ENCODE measurements at regions of chr16 and their contacts with region 1.

Region 1: GRCh38 chr16:29784901-29785500 is 5.5 kb upstream of the KIF22 start:
- DNase-seq: peak; percentile 83
- ATAC-seq: peak; percentile 95
- H3K4me3 Mint-ChIP-seq: peak overlapping the region; percentile 47
- H3K27ac Mint-ChIP-seq: no peak overlapping the region
- H3K4me1 Mint-ChIP-seq: peaks cover 25% of the 10 kb centered on the region
- H3K27me3 Mint-ChIP-seq: peaks cover 10% of the 10 kb centered on the region

Region 2: DNA sequence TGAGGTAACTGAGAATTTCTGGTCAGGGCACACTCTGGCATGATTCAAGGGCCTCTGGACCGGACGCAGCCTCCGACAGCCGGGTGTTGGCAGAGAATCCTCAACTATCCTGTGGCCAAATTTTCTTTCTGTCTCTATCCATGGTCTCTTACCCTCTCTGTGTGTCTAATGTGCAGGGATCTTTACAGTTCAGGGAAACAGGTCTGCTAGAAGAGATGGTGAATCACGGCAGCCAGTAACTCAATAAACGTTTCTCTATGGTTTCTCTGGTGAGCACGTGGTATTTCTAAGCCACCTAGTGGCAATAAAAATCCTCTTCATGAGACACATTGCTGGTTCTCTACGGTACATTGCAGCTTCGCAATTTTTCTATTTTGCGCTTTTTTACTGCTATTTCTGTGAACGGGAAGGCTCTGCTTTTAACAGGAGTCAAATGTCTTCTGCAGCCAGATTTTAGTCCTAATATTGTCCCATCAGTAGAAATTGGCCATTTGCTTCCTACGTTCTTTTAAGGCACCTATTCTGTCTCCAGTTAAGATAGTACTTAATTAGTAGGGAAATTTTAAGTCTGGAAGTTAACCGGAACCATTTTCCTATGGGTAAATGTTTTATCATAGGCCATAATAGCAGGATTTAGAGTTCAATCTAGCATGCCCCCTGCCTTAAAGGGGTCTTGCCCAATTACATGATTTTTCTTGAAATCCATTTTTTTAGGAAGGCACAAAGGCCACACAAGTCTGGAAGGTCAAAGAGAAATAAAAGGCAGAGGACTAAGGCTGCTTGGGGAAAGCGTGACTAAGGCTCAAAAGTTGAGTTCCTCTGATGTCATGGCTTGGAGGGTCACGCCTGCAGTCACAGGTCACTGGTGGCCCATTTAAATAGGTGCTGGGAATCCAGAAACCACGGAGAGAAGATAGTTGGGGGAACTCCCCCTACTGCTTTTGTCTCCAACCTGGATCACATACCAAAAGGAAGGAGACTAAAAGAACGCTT is 74.5 kb before region 1 on chr16:
- CTCF ChIA-PET with region 1: interaction called, 11 read pairs
- POLR2A ChIA-PET with region 1: interaction called, 3 read pairs
- DNase-seq: peak; percentile 64
- ATAC-seq: peak; percentile 97
- H3K4me3 Mint-ChIP-seq: no peak overlapping the region
- H3K27ac Mint-ChIP-seq: no peak overlapping the region
- H3K4me1 Mint-ChIP-seq: peaks cover 12% of the 10 kb centered on the region
- H3K27me3 Mint-ChIP-seq: peaks cover 8% of the 10 kb centered on the region

Region 3: GRCh38 chr16:29745853-29746345 is 39.1 kb before region 1 on chr16 and contains the start of gene C16orf54:
- CTCF ChIA-PET with region 1: interaction called, 16 read pairs
- POLR2A ChIA-PET with region 1: interaction called, 27 read pairs
- DNase-seq: peak; percentile 97
- ATAC-seq: peak; percentile 84
- H3K4me3 Mint-ChIP-seq: peak within 1 kb of the TSS; percentile 99
- H3K27ac Mint-ChIP-seq: peak within 1 kb of the TSS; percentile 96
- H3K4me1 Mint-ChIP-seq: peaks cover 60% of the 10 kb centered on the region
- H3K27me3 Mint-ChIP-seq: no peaks in the 10 kb centered on the region
- total RNA-seq, gene C16orf54: 64.3 to 68.0 TPM

Region 4: DNA sequence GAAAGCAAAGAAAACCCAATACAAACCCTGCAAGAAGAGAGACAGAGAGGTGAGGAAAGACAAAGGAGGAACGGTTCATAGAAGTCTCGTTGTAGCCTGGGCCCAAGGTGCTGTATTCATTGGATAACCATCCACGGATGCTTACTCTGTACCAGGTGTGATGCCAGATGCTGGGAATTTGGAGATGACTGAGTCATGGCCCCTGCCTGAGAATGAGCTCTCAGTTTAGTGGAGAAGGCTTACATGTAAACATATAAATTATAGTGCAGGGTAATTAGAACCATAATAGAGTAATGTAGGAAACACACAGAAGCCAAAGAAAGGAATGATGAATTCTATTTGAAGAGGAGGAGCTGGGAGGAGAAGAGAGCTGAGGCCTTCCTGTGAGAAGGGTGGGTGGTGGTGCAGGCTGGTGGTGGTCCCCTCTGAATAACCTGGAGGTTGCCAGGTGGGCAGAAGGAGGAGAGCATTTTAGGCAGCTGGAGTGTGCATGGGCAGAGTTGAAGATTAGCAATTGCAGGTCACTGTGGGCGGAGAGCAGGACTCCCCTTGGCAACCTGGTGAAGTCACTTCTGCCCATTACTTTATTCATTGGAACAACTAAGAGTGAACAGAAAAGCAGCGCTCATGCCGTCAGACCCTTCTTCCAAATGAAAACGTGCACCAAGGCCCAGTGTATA is 14.6 kb before region 1 on chr16:
- CTCF ChIA-PET with region 1: interaction called, 17 read pairs
- POLR2A ChIA-PET with region 1: interaction called, 3 read pairs
- DNase-seq: no peak
- ATAC-seq: no peak
- H3K4me3 Mint-ChIP-seq: no peak overlapping the region
- H3K27ac Mint-ChIP-seq: no peak overlapping the region
- H3K4me1 Mint-ChIP-seq: peaks cover 4% of the 10 kb centered on the region
- H3K27me3 Mint-ChIP-seq: no peaks in the 10 kb centered on the region

Region 5: GRCh38 chr16:29815793-29816693 is 31.0 kb after region 1 on chr16 and contains the start of gene PAGR1:
- CTCF ChIA-PET with region 1: interaction called, 37 read pairs
- POLR2A ChIA-PET with region 1: interaction called, 12 read pairs
- DNase-seq: peak; percentile 99
- ATAC-seq: peak; percentile 76
- H3K4me3 Mint-ChIP-seq: peak within 1 kb of the TSS; percentile 98
- H3K27ac Mint-ChIP-seq: peak within 1 kb of the TSS; percentile 92
- H3K4me1 Mint-ChIP-seq: peaks cover 70% of the 10 kb centered on the region
- H3K27me3 Mint-ChIP-seq: peaks cover 8% of the 10 kb centered on the region
- total RNA-seq, gene PAGR1: 39.1 TPM

Region 6: DNA sequence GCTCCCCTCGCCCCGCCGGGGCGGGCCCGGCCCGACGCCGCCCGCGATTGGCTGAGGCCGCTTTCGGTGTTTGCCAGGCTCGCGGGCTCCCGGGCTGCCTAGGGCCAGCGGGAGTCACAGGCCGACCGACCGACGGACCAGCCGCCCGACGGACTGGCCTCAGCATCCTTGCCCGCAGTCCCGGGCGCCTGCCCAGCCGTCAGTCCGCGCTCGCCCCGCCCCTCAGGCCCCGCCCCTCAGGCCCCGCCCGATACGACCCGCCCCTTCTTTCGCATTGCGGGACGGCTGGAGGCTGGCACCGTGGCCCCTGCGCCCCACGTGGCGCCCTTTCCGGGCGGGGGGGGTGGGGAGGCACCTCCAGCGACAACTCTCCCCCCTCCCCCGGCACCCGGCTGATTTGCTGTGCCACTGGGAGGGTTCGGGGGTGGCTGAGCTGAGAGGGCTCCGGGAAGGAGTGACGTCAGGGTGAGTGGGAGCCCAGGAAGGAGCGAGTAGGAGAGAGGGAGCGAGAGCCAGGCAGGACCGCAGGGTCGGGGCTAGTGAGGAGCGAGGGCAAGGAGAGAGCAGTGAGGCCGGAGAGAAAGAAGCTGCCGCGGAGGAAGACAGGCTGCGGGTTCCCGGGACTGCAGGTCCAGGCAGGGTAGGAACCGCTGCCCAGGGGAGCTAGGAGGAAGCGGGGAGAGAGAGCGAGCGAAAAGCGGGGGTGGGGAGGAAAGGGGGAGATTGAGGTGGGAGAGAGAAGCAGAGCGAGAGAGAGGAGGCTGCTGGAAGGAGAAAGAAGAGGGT is 115.3 kb after region 1 on chr16 and contains the start of gene ASPHD1:
- CTCF ChIA-PET with region 1: no interaction called
- POLR2A ChIA-PET with region 1: no interaction called
- DNase-seq: no peak
- ATAC-seq: peak; percentile 88
- H3K4me3 Mint-ChIP-seq: peak within 1 kb of the TSS; percentile 67
- H3K27ac Mint-ChIP-seq: no peak within 1 kb of the TSS
- H3K4me1 Mint-ChIP-seq: peaks cover 12% of the 10 kb centered on the region
- H3K27me3 Mint-ChIP-seq: peaks cover 24% of the 10 kb centered on the region
- total RNA-seq, gene ASPHD1: 0.24 TPM in 1 of 2 experiments, not detected in the other